ENCODE measurements at regions of chr20 and their contacts with region 1.

Region 1: GRCh38 chr20:45771182-45771759 is 20.4 kb downstream of the WFDC3 start:
- DNase-seq: peak; percentile 83
- ATAC-seq: peak; percentile 82
- H3K4me3 Mint-ChIP-seq: no peak overlapping the region
- H3K27ac Mint-ChIP-seq: no peak overlapping the region
- H3K4me1 Mint-ChIP-seq: peaks cover 5% of the 10 kb centered on the region
- H3K27me3 Mint-ChIP-seq: peaks cover 32% of the 10 kb centered on the region

Region 2: DNA sequence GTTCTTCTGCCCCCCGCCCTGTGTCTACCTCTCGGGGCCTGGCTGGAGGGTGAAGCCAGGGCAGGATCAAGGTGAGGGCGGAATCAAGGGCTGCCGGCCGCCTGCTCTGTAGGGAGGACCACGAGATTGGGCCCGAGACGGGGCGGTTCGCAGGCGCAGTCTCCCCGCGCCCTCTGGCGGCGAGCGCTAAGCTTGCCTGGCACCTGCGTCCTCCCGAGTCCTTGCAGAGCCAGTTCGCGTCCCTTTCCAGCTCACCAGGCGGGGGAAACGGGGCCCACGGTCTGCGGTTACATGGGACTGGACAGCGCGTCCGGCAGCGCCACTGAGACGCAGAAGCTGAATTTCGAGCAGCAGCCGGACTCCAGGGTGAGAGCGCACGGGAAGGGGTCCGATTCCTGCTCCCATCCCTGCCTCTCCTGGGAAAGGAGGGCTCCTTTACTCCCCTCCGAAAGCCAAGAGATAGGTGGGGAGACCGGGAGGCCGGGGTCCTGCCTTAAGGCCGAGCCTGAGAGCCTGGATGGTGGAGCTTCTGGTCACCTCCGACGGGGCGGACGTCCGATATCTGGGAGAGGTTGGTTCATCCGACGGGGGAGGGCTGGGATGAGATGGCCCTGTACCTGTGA is 459.6 kb before region 1 on chr20:
- CTCF ChIA-PET with region 1: interaction called, 11 read pairs
- DNase-seq: peak; percentile 77
- ATAC-seq: peak; percentile 79
- H3K4me3 Mint-ChIP-seq: no peak overlapping the region
- H3K27ac Mint-ChIP-seq: no peak overlapping the region
- H3K4me1 Mint-ChIP-seq: peaks cover 17% of the 10 kb centered on the region
- H3K27me3 Mint-ChIP-seq: peaks cover 43% of the 10 kb centered on the region

Region 3: GRCh38 chr20:45362804-45363610 is 408.3 kb before region 1 on chr20 and contains the start of gene SYS1:
- CTCF ChIA-PET with region 1: interaction called, 19 read pairs
- DNase-seq: peak; percentile 99
- ATAC-seq: peak; percentile 92
- H3K4me3 Mint-ChIP-seq: peak within 1 kb of the TSS; percentile 100
- H3K27ac Mint-ChIP-seq: peak within 1 kb of the TSS; percentile 97
- H3K4me1 Mint-ChIP-seq: peaks cover 52% of the 10 kb centered on the region
- H3K27me3 Mint-ChIP-seq: peaks cover 3% of the 10 kb centered on the region
- total RNA-seq, gene SYS1: 19.6 to 24.9 TPM

Region 4: DNA sequence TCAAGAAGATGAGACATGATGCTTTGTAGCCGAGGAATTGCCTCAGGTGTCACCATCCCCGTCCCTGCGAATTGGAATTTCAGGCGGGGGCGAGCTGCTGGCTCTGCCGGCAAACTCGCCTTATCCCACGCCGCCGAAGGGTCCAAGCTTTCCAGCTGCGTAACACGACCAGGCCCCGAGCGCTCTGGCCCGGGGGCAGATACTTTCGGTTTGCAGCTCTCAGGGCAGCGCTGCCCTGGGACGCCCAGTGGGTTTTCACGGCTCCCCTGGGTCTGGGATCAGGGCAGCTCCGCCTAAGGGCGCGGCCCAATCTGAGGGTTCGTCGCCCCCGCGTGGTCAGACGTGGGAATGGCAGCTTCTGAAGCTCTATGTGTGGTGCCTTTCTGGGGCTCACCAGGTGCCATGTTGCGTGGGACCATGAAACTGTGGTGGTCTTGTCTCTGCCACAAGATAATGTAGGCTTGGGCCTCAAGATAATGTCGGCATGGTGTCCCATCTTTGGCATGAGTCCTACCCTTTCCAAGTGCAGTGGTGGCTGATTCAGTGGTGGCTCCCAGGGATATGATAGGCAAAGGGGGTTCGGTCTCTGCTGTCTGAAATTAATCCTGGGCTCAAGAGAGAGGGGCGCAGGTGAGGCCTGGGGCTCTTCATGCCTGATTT is 334.4 kb before region 1 on chr20:
- CTCF ChIA-PET with region 1: interaction called, 24 read pairs
- DNase-seq: peak; percentile 91
- ATAC-seq: peak; percentile 100
- H3K4me3 Mint-ChIP-seq: peak overlapping the region; percentile 81
- H3K27ac Mint-ChIP-seq: peak overlapping the region; percentile 58
- H3K4me1 Mint-ChIP-seq: peaks cover 25% of the 10 kb centered on the region
- H3K27me3 Mint-ChIP-seq: no peaks in the 10 kb centered on the region

Region 5: GRCh38 chr20:45456632-45457031 is 314.6 kb before region 1 on chr20:
- CTCF ChIA-PET with region 1: interaction called, 61 read pairs
- DNase-seq: peak; percentile 61
- ATAC-seq: peak; percentile 33
- H3K4me3 Mint-ChIP-seq: no peak overlapping the region
- H3K27ac Mint-ChIP-seq: no peak overlapping the region
- H3K4me1 Mint-ChIP-seq: no peaks in the 10 kb centered on the region
- H3K27me3 Mint-ChIP-seq: peaks cover 18% of the 10 kb centered on the region

Region 6: DNA sequence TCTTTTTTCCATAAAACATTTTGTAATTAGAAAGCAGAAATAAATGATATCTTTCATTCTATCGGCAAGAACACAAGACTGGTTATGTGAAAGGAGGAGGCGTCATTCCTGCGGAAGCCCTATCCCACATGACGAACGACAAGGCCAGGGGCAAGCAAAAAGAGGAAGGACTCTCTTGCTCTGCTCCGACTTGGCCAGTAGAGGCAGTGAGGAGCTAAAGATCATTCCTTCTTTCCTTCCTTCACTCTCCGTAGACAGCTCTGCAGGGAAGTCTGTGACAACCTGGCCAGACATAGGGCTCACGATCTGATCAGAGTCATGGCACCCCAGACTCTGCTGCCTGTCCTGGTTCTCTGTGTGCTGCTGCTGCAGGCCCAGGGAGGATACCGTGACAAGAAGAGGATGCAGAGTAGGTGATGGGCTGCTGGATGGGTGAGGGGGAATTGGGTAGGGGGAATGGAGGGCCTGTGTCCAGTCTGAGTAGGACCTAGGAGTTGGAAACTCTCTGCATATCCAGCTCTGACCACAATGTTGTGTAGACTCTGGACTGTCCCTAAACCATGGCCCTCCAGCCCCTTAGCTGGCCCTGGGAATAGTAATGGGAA is 141.7 kb before region 1 on chr20 and contains the start of gene WFDC10A:
- CTCF ChIA-PET with region 1: interaction called, 21 read pairs
- DNase-seq: no peak
- ATAC-seq: peak; percentile 67
- H3K4me3 Mint-ChIP-seq: no peak within 1 kb of the TSS
- H3K27ac Mint-ChIP-seq: no peak within 1 kb of the TSS
- H3K4me1 Mint-ChIP-seq: no peaks in the 10 kb centered on the region
- H3K27me3 Mint-ChIP-seq: peaks cover 22% of the 10 kb centered on the region
- total RNA-seq, gene WFDC10A: not detected